ENCODE measurements at regions of chr4 and their contacts with region 1.

Region 1: DNA sequence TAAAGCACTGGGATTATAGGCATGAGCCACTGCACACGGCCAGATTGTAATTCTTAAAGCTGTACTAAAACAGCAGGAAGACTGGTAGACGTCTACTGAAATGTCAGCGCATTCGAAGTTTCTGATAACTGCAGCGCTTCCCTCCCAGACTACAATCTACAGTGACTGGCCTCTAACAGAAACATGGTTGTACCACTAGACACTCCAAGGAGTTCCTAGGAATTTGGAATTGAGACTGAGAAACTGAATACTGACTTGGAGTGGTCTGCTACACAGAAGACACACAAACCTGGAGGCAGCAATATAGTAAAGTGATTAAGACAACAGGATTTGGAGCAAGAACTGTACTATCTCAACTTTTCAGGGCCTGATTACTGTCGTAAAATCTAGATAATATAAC is 937 bp downstream of the HELQ start:
- DNase-seq: no peak
- H3K4me3 Mint-ChIP-seq: peak overlapping the region; percentile 93
- H3K27ac Mint-ChIP-seq: peak overlapping the region; percentile 98
- H3K4me1 Mint-ChIP-seq: no peaks in the 10 kb centered on the region
- H3K27me3 Mint-ChIP-seq: no peaks in the 10 kb centered on the region
- CTCF ChIP-seq: no peak

Region 2: GRCh38 chr4:83124111-83124780 is 330.4 kb before region 1 on chr4:
- CTCF ChIA-PET with region 1: no interaction called
- intact Hi-C with region 1: no loop called
- DNase-seq: no peak
- H3K4me3 Mint-ChIP-seq: no peak overlapping the region
- H3K27ac Mint-ChIP-seq: no peak overlapping the region
- H3K4me1 Mint-ChIP-seq: peaks cover 6% of the 10 kb centered on the region
- H3K27me3 Mint-ChIP-seq: no peaks in the 10 kb centered on the region
- CTCF ChIP-seq: no peak

Region 3: GRCh38 chr4:83362492-83363329 is 92.0 kb before region 1 on chr4:
- CTCF ChIA-PET with region 1: interaction called, 4 read pairs
- intact Hi-C with region 1: loop called (anchors 5 kb)
- DNase-seq: no peak
- H3K4me3 Mint-ChIP-seq: no peak overlapping the region
- H3K27ac Mint-ChIP-seq: no peak overlapping the region
- H3K4me1 Mint-ChIP-seq: peaks cover 10% of the 10 kb centered on the region
- H3K27me3 Mint-ChIP-seq: no peaks in the 10 kb centered on the region
- CTCF ChIP-seq: no peak

Measured in Calu3 (cell line).